ENCODE measurements at regions of chr3 and their contacts with region 1.

Region 1: DNA sequence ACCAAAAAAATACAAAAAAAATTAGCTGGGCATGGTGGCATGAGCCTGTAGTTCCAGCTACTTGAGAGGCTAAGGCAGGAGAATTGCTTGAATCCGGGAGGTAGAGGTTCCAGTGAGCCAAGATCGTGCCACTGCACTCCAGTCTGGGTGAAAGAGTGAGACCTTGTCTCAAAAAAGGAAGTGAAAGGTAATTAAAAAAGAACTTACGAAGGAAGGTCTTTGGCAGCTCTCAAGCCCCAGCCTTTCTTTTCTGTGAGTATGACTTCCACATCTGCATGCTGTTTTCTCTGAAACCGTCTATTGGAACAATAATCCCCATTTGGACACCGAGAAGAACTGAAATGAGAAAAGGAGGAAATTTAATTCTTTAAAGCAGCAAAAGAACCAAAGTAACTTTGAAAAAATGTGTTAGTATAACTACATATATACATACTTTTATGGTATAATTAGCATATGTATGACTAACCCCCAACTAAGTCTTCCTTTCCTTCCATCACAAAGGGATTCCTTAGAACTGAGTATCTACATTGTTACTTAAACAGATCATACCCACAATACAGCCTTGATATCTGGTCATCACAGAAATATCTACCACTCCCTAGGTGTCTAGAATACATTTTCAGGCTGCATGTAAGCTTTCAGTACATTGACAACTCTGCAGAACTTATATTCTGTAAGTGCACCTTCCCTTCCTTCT is 50.1 kb downstream of the SETD2 start:
- DNase-seq: peak; percentile 0
- H3K4me3 ChIP-seq: no peak overlapping the region
- H3K27ac ChIP-seq: no peak overlapping the region
- H3K4me1 ChIP-seq: peaks cover 7% of the 10 kb centered on the region
- H3K27me3 ChIP-seq: no peaks in the 10 kb centered on the region
- CTCF ChIP-seq: no peak

Region 2: GRCh38 chr3:47261301-47261700 is 147.5 kb after region 1 on chr3:
- CTCF ChIA-PET with region 1: no interaction called
- POLR2A ChIA-PET with region 1: no interaction called
- intact Hi-C with region 1: no loop called
- DNase-seq: no peak
- H3K4me3 ChIP-seq: no peak overlapping the region
- H3K27ac ChIP-seq: no peak overlapping the region
- H3K4me1 ChIP-seq: no peaks in the 10 kb centered on the region
- H3K27me3 ChIP-seq: no peaks in the 10 kb centered on the region
- CTCF ChIP-seq: no peak

Region 3: DNA sequence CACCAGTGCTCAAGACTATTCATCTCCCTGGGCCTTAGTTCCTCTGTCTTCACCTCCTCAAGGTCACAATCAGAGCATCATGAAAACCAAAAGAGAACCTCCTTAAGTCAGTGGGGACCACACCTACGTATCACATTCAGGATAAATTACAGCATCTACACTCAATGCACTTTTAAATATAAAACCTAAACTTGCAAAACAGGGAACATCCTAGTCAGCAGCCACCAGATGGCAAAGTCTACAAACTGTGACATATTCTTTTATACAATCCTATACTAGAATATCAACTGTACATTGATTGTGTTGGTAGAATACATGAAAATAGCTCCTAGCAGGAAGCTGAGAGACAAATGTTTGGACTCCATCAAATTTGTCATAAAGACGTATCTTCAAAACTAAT is 160.8 kb after region 1 on chr3:
- CTCF ChIA-PET with region 1: interaction called, 16 read pairs
- POLR2A ChIA-PET with region 1: no interaction called
- intact Hi-C with region 1: no loop called
- DNase-seq: no peak
- H3K4me3 ChIP-seq: no peak overlapping the region
- H3K27ac ChIP-seq: no peak overlapping the region
- H3K4me1 ChIP-seq: no peaks in the 10 kb centered on the region
- H3K27me3 ChIP-seq: no peaks in the 10 kb centered on the region
- CTCF ChIP-seq: no peak